MCF 10A (cell line): ENCODE measurements at regions of chr17 and their contacts with region 1.

Region 1: GRCh38 chr17:41548844-41549595 is 20.9 kb upstream of the KRT19 start:
- DNase-seq: peak; percentile 93
- H3K4me3 Mint-ChIP-seq: peak overlapping the region; percentile 47
- H3K27ac Mint-ChIP-seq: peak overlapping the region; percentile 78
- H3K4me1 Mint-ChIP-seq: peaks cover 44% of the 10 kb centered on the region
- H3K27me3 Mint-ChIP-seq: no peaks in the 10 kb centered on the region
- CTCF ChIP-seq: peak; percentile 63

Region 2: GRCh38 chr17:40903129-40904065 is 645.6 kb before region 1 on chr17:
- CTCF ChIA-PET with region 1: interaction called, 48 read pairs
- POLR2A ChIA-PET with region 1: interaction called, 5 read pairs
- intact Hi-C with region 1: no loop called
- DNase-seq: peak; percentile 58
- H3K4me3 Mint-ChIP-seq: no peak overlapping the region
- H3K27ac Mint-ChIP-seq: peak overlapping the region; percentile 14
- H3K4me1 Mint-ChIP-seq: peaks cover 24% of the 10 kb centered on the region
- H3K27me3 Mint-ChIP-seq: no peaks in the 10 kb centered on the region
- CTCF ChIP-seq: no peak

Region 3: GRCh38 chr17:41392278-41392677 is 156.7 kb before region 1 on chr17:
- CTCF ChIA-PET with region 1: no interaction called
- POLR2A ChIA-PET with region 1: no interaction called
- intact Hi-C with region 1: no loop called
- DNase-seq: no peak
- H3K4me3 Mint-ChIP-seq: no peak overlapping the region
- H3K27ac Mint-ChIP-seq: no peak overlapping the region
- H3K4me1 Mint-ChIP-seq: no peaks in the 10 kb centered on the region
- H3K27me3 Mint-ChIP-seq: no peaks in the 10 kb centered on the region
- CTCF ChIP-seq: no peak

Region 4: GRCh38 chr17:41403798-41404671 is 145.0 kb before region 1 on chr17:
- CTCF ChIA-PET with region 1: interaction called, 22 read pairs
- POLR2A ChIA-PET with region 1: interaction called, 4 read pairs
- intact Hi-C with region 1: loop called (anchors 2 kb)
- DNase-seq: peak; percentile 99
- H3K4me3 Mint-ChIP-seq: peak overlapping the region; percentile 3
- H3K27ac Mint-ChIP-seq: peak overlapping the region; percentile 35
- H3K4me1 Mint-ChIP-seq: peaks cover 13% of the 10 kb centered on the region
- H3K27me3 Mint-ChIP-seq: peaks cover 54% of the 10 kb centered on the region
- CTCF ChIP-seq: no peak

Region 5: DNA sequence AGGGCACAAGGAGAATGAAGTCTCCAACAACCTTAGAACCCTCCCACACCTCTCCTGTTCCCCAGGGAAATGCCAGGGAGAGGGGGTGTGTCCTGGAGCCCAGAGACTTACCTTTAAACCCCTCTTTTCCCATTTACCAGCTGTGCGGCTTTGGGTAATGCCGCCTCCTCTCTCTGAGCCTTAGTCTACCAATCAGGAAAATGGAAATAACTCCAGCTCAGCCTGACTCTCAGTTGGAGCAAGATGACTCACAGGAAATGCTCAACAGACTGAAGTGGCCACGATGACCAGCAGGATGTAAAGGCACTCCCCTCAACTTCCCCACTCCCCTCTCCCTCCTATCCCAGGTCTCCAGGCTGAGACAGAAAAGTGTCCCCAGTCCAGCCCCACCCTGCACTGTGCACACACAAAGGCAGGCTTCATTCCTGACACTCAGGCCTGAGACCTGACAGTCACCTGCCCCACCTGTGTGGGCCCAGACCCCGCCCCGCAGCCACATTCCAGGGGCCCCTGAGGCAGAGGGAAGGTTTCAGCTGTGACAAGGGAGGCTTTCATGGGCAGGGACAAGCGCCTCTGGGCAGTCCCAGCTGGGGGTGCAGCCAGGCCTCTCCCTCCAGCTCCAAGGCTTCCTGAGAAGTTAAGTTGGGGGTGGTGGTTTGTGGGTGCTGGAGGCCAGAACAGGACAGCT is 27.3 kb before region 1 on chr17:
- CTCF ChIA-PET with region 1: interaction called, 80 read pairs
- POLR2A ChIA-PET with region 1: interaction called, 83 read pairs
- intact Hi-C with region 1: loop called (anchors 1 kb)
- DNase-seq: peak; percentile 87
- H3K4me3 Mint-ChIP-seq: peak overlapping the region; percentile 49
- H3K27ac Mint-ChIP-seq: peak overlapping the region; percentile 88
- H3K4me1 Mint-ChIP-seq: peaks cover 55% of the 10 kb centered on the region
- H3K27me3 Mint-ChIP-seq: no peaks in the 10 kb centered on the region
- CTCF ChIP-seq: no peak

Region 6: GRCh38 chr17:41579484-41580243 is 30.6 kb after region 1 on chr17:
- CTCF ChIA-PET with region 1: interaction called, 39 read pairs
- POLR2A ChIA-PET with region 1: interaction called, 9 read pairs
- intact Hi-C with region 1: loop called (anchors 1 kb)
- DNase-seq: peak; percentile 96
- H3K4me3 Mint-ChIP-seq: peak overlapping the region; percentile 1
- H3K27ac Mint-ChIP-seq: peak overlapping the region; percentile 97
- H3K4me1 Mint-ChIP-seq: peaks cover 60% of the 10 kb centered on the region
- H3K27me3 Mint-ChIP-seq: no peaks in the 10 kb centered on the region
- CTCF ChIP-seq: peak; percentile 87

Region 7: DNA sequence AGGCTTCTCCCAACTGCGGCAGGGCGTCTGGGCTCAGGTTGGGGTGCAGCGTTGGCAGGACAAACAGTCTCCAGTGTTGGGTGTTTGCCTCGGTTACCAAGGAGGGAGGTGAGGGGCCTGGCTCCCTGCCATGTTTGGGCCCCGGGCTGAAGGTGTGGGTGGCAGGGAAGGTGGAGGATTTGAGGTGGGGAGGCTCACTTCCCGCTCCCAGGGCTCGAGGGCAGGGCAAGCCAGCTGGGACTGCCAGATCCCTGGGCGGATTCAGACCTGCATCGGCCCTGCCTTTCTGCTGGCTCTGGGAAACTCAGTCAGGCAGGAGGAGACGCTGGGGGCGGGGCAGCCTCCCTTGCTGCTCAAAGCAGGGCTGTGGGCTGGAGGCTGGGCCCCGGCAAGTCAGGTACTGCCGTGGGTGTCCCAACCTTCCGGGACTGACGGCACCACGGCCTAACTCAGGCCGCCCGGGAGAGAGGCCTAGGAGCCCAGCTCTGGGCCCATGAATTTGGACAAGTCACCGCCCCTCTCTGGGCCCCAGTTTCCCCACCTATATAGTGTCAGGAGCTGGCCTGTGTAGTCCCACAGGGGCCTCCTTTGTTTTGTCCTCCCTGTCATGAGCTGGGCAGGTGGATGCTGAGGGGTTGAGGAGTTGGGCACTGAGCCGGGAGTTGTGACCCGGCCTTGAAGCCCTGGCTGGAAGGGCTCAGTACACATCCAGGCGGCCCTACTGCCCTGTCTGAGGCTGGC is 106.8 kb after region 1 on chr17:
- CTCF ChIA-PET with region 1: interaction called, 415 read pairs
- POLR2A ChIA-PET with region 1: interaction called, 101 read pairs
- intact Hi-C with region 1: no loop called
- DNase-seq: peak; percentile 98
- H3K4me3 Mint-ChIP-seq: peak overlapping the region; percentile 69
- H3K27ac Mint-ChIP-seq: no peak overlapping the region
- H3K4me1 Mint-ChIP-seq: peaks cover 68% of the 10 kb centered on the region
- H3K27me3 Mint-ChIP-seq: no peaks in the 10 kb centered on the region
- CTCF ChIP-seq: no peak